WTC11 (cell line): ENCODE measurements at regions of chr6 and their contacts with region 1.

Region 1: GRCh38 chr6:131182991-131183425 is 47.7 kb downstream of the AKAP7 start:
- DNase-seq: no peak
- ATAC-seq: peak; percentile 80
- H3K4me3 Mint-ChIP-seq: no peak overlapping the region
- H3K27ac Mint-ChIP-seq: peak overlapping the region; percentile 94
- H3K4me1 Mint-ChIP-seq: peaks cover 16% of the 10 kb centered on the region
- H3K27me3 Mint-ChIP-seq: no peaks in the 10 kb centered on the region
- CTCF ChIP-seq: no peak

Region 2: DNA sequence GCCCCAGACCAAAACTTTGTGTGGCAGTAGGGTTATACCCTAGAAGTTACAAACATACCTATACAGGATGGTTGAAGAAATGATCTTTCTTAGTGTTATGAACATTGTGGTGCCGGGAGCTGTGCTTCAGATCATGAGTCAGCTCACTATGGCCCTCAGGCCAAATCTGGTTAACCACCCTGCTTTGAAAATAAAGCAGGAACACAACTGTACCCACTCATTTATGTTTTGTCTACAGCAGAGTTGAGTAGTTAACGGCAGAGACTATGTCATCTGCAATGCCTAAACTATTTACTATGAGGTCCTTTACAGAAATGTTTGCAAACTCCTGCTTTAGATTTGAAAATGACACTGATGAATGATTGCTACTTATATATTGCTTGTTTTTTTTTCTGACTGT is 23.4 kb before region 1 on chr6:
- CTCF ChIA-PET with region 1: interaction called, 10 read pairs
- POLR2A ChIA-PET with region 1: no interaction called
- DNase-seq: no peak
- ATAC-seq: no peak
- H3K4me3 Mint-ChIP-seq: no peak overlapping the region
- H3K27ac Mint-ChIP-seq: no peak overlapping the region
- H3K4me1 Mint-ChIP-seq: peaks cover 54% of the 10 kb centered on the region
- H3K27me3 Mint-ChIP-seq: no peaks in the 10 kb centered on the region
- CTCF ChIP-seq: no peak

Region 3: DNA sequence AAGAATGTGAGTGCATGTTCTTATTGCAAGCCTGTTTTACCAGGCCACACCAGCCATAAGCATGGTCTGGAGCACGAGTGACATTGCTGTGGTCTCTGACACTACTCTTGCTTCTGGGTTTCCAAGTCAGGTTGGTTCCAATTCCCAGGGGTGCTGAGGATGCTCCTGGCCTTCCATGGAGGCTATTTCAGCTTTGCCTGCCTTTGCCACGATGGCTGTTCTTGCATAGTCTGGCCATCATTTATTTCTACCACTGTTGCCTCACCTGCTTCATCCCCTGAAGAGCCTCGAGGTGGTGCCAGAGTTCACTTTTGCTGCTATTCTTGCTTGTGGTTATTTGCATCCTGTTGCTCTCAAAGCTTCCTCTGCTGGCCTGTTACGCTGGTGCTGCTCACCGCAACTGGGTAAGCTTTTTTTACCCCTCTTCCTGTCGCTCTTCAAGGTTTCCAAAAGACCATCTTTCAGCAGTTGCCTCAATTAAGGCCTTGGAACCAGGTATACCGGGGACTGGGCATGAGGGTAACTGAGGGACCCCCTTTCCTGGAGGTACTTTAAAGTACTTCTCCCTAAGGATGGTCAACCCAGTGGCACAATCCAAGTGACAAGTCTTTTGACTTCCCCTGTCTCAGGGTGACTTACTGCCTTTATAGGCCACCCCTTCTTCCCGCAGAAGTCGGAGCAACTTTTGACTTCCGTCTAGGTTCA is 16.7 kb after region 1 on chr6:
- CTCF ChIA-PET with region 1: interaction called, 13 read pairs
- POLR2A ChIA-PET with region 1: no interaction called
- DNase-seq: peak; percentile 61
- ATAC-seq: peak; percentile 99
- H3K4me3 Mint-ChIP-seq: peak overlapping the region; percentile 8
- H3K27ac Mint-ChIP-seq: 0 out of 2 replicates have a peak overlapping the region, but pooled peaks have one; percentile 25
- H3K4me1 Mint-ChIP-seq: peaks cover 33% of the 10 kb centered on the region
- H3K27me3 Mint-ChIP-seq: no peaks in the 10 kb centered on the region; the same call in 1 of the 2 replicates
- CTCF ChIP-seq: peak; percentile 46

Region 4: GRCh38 chr6:131460614-131461000 is 277.6 kb after region 1 on chr6:
- CTCF ChIA-PET with region 1: interaction called, 10 read pairs
- POLR2A ChIA-PET with region 1: no interaction called
- DNase-seq: no peak
- ATAC-seq: no peak
- H3K4me3 Mint-ChIP-seq: no peak overlapping the region
- H3K27ac Mint-ChIP-seq: peak overlapping the region; percentile 11; the same call in 1 of the 2 replicates
- H3K4me1 Mint-ChIP-seq: peaks cover 16% of the 10 kb centered on the region
- H3K27me3 Mint-ChIP-seq: peaks cover 9% of the 10 kb centered on the region
- CTCF ChIP-seq: no peak

Region 5: DNA sequence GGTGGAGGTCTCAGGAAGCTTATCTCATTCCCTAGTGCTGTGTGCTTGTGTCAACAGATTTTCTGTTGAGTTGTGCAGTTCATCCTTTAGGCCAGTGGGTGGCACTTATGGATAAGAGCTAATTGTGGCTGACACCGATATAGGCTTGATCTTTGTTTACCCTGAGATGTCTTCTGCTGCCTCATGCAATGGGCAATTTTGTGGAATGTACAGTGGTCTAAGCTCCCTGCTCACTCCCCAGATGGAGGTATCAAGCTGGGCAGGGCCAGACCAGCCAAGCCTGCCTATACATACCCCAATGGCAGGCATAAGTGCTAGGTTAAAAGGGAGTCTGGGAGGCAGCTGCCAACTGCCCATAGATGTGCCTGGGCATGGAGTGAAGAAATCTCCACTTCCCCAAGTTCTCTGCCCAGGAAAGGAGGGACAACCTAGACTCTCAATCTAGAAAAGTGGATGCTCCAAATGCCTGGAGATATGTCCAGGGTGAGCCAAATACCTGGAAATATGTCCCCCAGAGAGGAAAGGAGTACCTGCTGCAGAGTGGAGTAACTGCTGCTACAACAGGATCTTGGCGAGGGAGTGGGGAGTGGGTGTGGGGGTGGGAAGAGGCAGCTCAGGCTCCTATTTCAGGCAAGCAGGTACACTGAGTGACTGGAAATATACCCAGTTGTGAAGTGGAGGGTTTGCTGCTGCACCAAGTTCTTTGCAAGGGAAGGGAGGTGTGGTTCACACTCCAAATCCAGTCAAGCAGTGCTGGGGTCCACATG is 336.8 kb after region 1 on chr6:
- CTCF ChIA-PET with region 1: interaction called, 14 read pairs
- POLR2A ChIA-PET with region 1: no interaction called
- DNase-seq: peak; percentile 59
- ATAC-seq: peak; percentile 98
- H3K4me3 Mint-ChIP-seq: no peak overlapping the region
- H3K27ac Mint-ChIP-seq: no peak overlapping the region
- H3K4me1 Mint-ChIP-seq: peaks cover 3% of the 10 kb centered on the region
- H3K27me3 Mint-ChIP-seq: no peaks in the 10 kb centered on the region; the same call in none of the 2 replicates
- CTCF ChIP-seq: peak; percentile 26

Region 6: DNA sequence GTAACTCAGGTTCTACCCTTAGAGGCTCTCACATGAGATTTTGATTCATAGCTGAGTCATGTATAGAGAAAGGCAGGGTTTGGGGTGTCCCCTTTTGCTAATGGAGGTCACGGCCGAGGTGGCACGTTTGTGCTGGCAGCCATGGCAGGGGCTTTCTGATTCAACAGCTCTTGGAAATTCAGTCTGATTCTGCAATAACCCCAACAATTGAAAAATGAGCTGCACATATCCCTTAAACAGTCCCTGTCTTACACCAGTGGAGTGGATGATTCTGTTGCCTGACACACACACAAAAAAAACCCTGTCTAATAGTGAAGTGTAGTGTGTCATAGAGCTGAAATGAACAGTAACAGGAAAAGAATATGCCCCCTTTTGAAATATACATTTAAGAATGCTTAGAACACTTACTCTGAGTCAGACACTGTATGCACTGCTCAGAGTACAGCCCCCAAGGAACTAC is 349.6 kb after region 1 on chr6:
- CTCF ChIA-PET with region 1: interaction called, 13 read pairs
- POLR2A ChIA-PET with region 1: no interaction called
- DNase-seq: no peak
- ATAC-seq: no peak
- H3K4me3 Mint-ChIP-seq: no peak overlapping the region
- H3K27ac Mint-ChIP-seq: no peak overlapping the region
- H3K4me1 Mint-ChIP-seq: peaks cover 20% of the 10 kb centered on the region
- H3K27me3 Mint-ChIP-seq: peaks cover 15% of the 10 kb centered on the region
- CTCF ChIP-seq: no peak